ENCODE measurements at regions of chr3 and their contacts with region 1.

Region 1: GRCh38 chr3:60528651-60529050 is 722.6 kb downstream of the FHIT start:
- DNase-seq: no peak
- H3K4me3 ChIP-seq: no peak overlapping the region
- H3K27ac ChIP-seq: no peak overlapping the region
- H3K4me1 ChIP-seq: no peaks in the 10 kb centered on the region
- H3K27me3 ChIP-seq: no peaks in the 10 kb centered on the region
- CTCF ChIP-seq: no peak
- POLR2A ChIP-seq: no peak

Region 2: DNA sequence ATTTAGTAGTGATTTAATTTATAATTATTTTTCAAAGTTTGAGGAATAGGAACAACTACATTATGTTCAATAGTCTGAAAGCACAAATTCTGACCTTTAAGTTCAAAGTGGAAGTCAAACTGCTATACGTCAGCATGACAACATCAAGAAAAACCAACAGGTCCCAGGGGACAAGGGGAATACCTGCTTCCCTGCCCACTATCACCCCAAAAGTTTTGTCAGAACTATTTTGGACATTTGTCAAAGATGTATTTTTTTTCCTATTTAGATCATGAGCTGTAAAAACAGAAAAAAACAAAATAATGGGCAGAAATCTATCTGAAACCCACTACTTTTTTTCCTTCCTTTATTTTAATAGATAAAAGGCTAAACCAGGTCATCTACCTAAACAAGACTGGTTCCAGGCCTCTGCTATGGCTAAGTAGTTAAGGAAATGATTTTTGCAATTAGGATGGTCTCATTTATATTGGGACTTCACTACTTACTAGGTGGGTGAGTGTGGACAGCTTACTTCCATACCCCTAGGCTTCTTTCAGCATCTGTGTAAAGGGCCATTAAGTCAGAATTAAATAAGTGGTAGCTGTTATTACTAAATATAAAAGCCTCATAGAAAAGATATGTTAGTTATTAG is 23.7 kb before region 1 on chr3:
- intact Hi-C with region 1: loop called (anchors 1 kb)
- DNase-seq: no peak
- H3K4me3 ChIP-seq: no peak overlapping the region
- H3K27ac ChIP-seq: no peak overlapping the region
- H3K4me1 ChIP-seq: no peaks in the 10 kb centered on the region
- H3K27me3 ChIP-seq: no peaks in the 10 kb centered on the region
- CTCF ChIP-seq: no peak
- POLR2A ChIP-seq: no peak